Activated B cell treated with CpG ODN at 0.5 μM for 24 hours (primary cell): ENCODE measurements at regions of chr9 and their contacts with region 1.

Region 1: DNA sequence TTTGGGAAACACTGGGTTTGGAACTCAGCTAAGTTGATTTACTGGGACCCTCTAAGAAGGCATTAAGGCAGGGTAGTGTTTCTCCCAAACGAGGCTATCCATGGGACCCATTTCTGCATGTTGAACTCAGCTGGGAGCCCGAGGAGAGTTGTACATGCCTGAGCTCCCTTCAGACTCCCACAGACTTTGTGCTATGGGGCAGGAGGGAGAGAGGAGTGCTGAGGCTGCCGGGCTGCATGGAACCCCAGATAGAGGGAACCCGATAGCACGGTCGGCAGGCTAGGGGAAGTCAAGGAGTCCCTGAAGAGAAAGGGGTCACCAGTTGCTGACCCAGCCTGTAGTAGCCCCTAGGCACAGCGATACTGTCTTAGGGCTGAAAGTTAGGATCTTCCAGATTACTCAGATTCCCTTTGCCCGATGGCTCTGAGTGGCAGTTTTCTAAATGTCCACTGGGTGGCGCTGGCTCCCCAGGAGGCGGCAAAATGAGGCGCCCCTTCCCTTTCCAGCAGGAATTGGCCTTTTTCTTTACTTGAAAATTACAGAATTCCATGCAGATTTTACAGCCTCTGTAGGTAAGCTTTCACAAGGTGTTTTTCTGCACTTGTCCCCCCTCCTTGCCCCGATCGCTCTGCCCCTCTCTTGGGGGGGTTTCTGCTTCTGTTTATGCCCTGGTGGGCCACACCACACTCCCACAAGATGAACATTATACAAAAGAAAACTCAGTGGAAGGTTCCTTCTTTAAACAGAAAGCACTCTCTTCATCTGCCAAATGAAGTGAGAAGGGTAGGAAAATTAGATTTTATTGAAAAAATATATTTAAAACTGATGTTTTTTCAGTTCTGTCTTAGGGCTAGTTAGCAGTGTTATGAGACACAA is 17.8 kb downstream of the NANS start:
- DNase-seq: peak; percentile 58
- ATAC-seq: peak; percentile 61
- H3K4me3 Mint-ChIP-seq: no peak overlapping the region
- H3K27ac Mint-ChIP-seq: peak overlapping the region; percentile 24
- H3K4me1 Mint-ChIP-seq: peaks cover 6% of the 10 kb centered on the region
- H3K27me3 Mint-ChIP-seq: no peaks in the 10 kb centered on the region
- CTCF ChIP-seq: peak; percentile 91

Region 2: DNA sequence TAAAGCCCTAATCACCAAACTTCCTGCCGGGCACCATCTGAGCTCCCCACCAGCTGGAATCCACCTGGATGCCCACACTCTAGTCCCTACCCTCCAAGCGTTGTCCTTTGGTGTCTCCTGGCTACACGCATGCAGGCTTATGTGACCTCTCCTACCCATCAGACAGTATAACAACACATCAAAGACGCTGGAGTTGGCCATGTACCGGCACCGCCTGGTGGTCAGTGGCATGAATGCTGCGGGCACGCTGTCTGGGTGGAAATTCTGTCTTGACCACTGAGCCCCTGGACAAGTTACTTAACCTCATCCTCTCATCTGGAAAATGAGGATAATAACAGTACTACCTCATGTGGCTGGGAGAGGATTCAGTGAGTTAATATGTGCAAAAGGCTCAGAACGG is 141.5 kb after region 1 on chr9:
- CTCF ChIA-PET with region 1: interaction called, 3 read pairs
- POLR2A ChIA-PET with region 1: no interaction called
- intact Hi-C with region 1: loop called (anchors 1 kb)
- DNase-seq: no peak
- ATAC-seq: no peak
- H3K4me3 Mint-ChIP-seq: no peak overlapping the region
- H3K27ac Mint-ChIP-seq: no peak overlapping the region
- H3K4me1 Mint-ChIP-seq: no peaks in the 10 kb centered on the region
- H3K27me3 Mint-ChIP-seq: no peaks in the 10 kb centered on the region
- CTCF ChIP-seq: no peak

Region 3: DNA sequence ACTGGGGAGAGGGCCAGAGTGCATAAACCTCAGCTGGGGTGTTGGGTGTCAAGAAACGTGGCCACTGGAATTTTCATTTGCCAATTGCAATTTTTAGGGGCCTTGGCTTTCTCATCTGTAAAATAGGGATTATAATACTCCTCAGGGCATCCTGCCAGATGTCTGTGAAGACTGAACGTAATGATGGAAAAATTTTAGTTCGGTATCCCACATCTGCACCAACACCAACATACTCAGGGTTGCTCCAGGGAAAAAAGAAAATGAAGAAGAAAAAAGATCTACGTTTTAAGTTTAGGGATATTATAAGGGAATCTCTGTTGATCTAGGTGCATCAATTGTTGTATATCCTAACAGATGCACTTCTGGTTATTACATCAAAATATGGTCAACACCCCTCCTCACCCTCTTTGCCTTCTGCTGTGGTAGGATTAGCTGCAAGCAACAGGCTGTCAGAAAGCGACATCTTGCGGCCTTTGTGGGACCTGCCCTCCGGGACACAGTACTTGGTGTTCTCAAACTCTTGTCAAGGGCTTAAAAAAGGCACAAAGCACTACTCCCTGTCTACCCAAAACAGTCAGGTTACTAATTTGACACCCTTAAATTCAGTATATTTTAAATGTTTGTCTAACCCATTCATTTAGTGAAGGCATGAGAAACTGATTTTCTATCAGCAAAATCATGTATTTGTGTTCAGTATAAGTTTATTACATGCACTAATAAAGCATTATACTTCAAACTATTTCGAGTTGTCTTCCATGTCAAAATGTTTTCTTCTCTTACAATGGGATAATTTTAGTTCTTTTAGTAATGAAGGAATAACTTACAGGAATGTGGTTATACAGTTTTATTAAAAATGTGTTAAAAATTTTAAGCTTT is 189.4 kb after region 1 on chr9:
- CTCF ChIA-PET with region 1: interaction called, 26 read pairs
- POLR2A ChIA-PET with region 1: no interaction called
- intact Hi-C with region 1: loop called (anchors 1 kb)
- DNase-seq: peak; percentile 58
- ATAC-seq: peak; percentile 100
- H3K4me3 Mint-ChIP-seq: no peak overlapping the region
- H3K27ac Mint-ChIP-seq: no peak overlapping the region
- H3K4me1 Mint-ChIP-seq: no peaks in the 10 kb centered on the region
- H3K27me3 Mint-ChIP-seq: peaks cover 5% of the 10 kb centered on the region
- CTCF ChIP-seq: peak; percentile 86